ENCODE measurements at regions of chr9 and their contacts with region 1.

Region 1: GRCh38 chr9:78919701-78920100 is 622.8 kb downstream of the PSAT1 start:
- DNase-seq: peak; percentile 72
- H3K4me3 Mint-ChIP-seq: no peak overlapping the region
- H3K27ac Mint-ChIP-seq: peak overlapping the region; percentile 20
- H3K4me1 Mint-ChIP-seq: peaks cover 29% of the 10 kb centered on the region
- H3K27me3 Mint-ChIP-seq: no peaks in the 10 kb centered on the region
- CTCF ChIP-seq: no peak

Region 2: GRCh38 chr9:78769690-78770089 is 150.0 kb before region 1 on chr9:
- CTCF ChIA-PET with region 1: no interaction called
- POLR2A ChIA-PET with region 1: no interaction called
- intact Hi-C with region 1: no loop called
- DNase-seq: no peak
- H3K4me3 Mint-ChIP-seq: no peak overlapping the region
- H3K27ac Mint-ChIP-seq: no peak overlapping the region
- H3K4me1 Mint-ChIP-seq: peaks cover 6% of the 10 kb centered on the region
- H3K27me3 Mint-ChIP-seq: no peaks in the 10 kb centered on the region
- CTCF ChIP-seq: no peak

Region 3: GRCh38 chr9:78871452-78872331 is 48.0 kb before region 1 on chr9:
- CTCF ChIA-PET with region 1: no interaction called
- POLR2A ChIA-PET with region 1: interaction called, 13 read pairs
- intact Hi-C with region 1: no loop called
- DNase-seq: peak; percentile 91
- H3K4me3 Mint-ChIP-seq: peak overlapping the region; percentile 5
- H3K27ac Mint-ChIP-seq: peak overlapping the region; percentile 88
- H3K4me1 Mint-ChIP-seq: peaks cover 37% of the 10 kb centered on the region
- H3K27me3 Mint-ChIP-seq: no peaks in the 10 kb centered on the region
- CTCF ChIP-seq: no peak